ENCODE measurements at regions of chr6 and their contacts with region 1.

Region 1: GRCh38 chr6:155273431-155273830 is 9.6 kb downstream of the CLDN20 start:
- DNase-seq: no peak
- H3K4me3 ChIP-seq: no peak overlapping the region
- H3K27ac ChIP-seq: peak overlapping the region; percentile 33 to 82 (median 61)
- H3K4me1 ChIP-seq: peaks cover 0 to 34% (median 2%) of the 10 kb centered on the region in 4 donors
- H3K27me3 ChIP-seq: no peaks in the 10 kb centered on the region
- CTCF ChIP-seq: no peak
- EP300 ChIP-seq: no peak
- POLR2A ChIP-seq: no peak

Region 2: DNA sequence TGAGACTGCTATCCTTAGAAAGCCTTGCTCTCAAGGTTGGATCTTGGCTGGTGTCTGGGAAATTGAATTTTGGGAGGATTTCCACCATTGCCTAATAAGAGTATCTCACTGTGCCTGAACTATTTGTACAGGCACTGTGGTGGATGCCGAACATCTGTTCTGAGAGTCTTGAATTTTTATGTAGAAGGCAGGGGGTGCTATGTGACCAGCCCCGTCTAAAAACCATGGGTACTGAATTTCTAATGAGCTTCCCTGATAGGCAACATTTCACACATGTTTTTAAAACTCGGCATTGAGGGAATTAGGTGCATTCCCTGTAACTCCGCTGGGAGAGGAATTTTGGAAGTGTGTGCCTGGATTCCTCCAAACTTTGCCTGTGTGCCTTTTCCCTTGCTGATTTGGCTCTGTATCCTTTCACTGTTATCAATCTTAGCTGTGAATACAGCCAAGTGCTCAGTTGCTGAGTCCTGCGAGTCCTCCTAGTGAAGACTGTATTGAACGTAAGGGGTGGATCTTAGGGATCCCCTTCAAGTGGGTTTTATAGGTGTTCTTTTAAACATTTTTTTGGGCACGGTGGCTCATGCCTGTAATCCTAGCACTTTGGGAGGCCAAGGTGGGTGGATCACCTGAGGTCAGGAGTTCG is 567.8 kb before region 1 on chr6:
- in situ Hi-C with region 1: loop called in 1 of 4 experiments (anchors 25 kb)
- intact Hi-C with region 1: no loop called
- DNase-seq: no peak
- H3K4me3 ChIP-seq: no peak overlapping the region
- H3K27ac ChIP-seq: no peak overlapping the region
- H3K4me1 ChIP-seq: no peaks in the 10 kb centered on the region
- H3K27me3 ChIP-seq: no peaks in the 10 kb centered on the region
- CTCF ChIP-seq: no peak
- EP300 ChIP-seq: no peak
- POLR2A ChIP-seq: no peak

Region 3: DNA sequence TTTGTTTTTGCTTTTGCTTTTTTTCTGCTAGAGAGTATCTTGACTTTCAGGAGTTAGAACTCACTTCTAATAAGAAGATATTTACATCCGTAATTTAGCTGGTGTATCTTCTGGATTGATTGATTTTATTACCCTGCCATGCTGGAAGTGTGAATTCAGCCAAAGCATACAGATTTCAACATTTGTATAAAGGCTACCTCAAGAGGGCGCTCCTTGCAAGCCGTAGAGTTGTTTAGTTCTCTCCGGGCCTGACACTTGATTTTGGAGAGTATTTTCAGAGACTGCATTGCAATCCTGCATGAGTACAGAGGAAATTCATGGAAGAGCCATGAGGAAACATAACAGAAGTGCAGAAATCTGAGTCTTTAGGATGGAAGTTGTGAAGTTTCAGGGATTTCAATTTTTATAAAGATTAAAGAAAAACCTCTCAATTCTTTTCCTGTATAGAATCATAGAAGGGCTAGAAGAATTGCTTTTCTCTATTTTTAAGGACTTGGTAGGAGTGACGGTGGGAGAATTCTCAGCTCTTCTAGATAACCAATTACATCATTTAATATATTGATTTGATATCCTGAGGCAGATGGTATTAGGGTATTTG is 345.0 kb before region 1 on chr6:
- in situ Hi-C with region 1: loop called in 1 of 4 experiments (anchors 25 kb)
- intact Hi-C with region 1: no loop called
- DNase-seq: peak; percentile 58
- H3K4me3 ChIP-seq: no peak overlapping the region
- H3K27ac ChIP-seq: no peak overlapping the region
- H3K4me1 ChIP-seq: peaks cover 0 to 11% (median 0%) of the 10 kb centered on the region in 4 donors
- H3K27me3 ChIP-seq: no peaks in the 10 kb centered on the region
- CTCF ChIP-seq: peak; percentile 68 to 76 (median 73)
- EP300 ChIP-seq: no peak
- POLR2A ChIP-seq: no peak

Region 4: DNA sequence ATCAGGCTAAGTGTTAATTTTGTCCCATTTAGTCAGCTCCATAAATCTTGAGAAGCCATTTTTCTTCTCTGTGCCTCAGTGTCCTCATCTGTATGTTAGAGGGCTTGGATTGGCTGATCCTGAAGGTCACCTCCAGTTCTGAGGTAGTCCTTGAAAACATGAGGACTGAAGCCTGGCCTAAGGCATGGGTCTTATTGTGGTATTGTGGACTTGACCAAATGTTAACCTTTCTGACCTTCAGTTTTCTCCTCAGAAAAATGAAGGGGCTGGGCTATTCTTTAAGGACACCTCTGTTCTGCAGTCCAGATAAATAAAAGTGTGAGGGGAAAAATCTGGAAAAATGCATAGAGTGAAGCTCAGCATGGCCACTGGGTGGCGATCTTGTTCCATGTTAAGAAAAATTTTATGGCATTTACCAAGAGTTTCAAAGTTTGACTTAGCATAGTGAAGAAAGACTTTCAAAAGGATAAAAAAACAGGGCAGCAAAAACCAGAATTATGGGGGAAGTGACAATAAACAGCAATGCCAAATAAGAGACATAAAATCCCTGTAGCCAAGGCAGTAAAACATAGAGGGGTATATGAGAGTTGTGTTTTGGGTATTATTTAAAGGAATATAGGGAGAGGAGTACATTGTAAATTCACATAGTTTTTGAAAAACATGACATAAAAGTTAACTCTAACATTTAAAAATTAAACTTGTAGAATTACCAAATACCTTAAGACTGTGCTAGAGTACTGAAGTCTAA is 54.1 kb after region 1 on chr6:
- in situ Hi-C with region 1: no loop called
- intact Hi-C with region 1: no loop called
- DNase-seq: peak; percentile 60
- H3K4me3 ChIP-seq: no peak overlapping the region
- H3K27ac ChIP-seq: no peak overlapping the region
- H3K4me1 ChIP-seq: peaks cover 0 to 3% (median 0%) of the 10 kb centered on the region in 4 donors
- H3K27me3 ChIP-seq: no peaks in the 10 kb centered on the region
- CTCF ChIP-seq: peak; percentile 76 to 88 (median 81)
- EP300 ChIP-seq: no peak
- POLR2A ChIP-seq: no peak